HCT116 (cell line): ENCODE measurements at regions of chr20 and their contacts with region 1.

Region 1: GRCh38 chr20:44460795-44461141 is 14.9 kb upstream of the TTPAL start:
- DNase-seq: peak; percentile 31
- ATAC-seq: peak; percentile 89
- H3K4me3 ChIP-seq: no peak overlapping the region
- H3K27ac ChIP-seq: no peak overlapping the region
- H3K4me1 ChIP-seq: peaks cover 0 to 8% of the 10 kb centered on the region in 2 experiments; a peak in 1 of 4 replicates
- H3K27me3 ChIP-seq: no peaks in the 10 kb centered on the region
- CTCF ChIP-seq: peak; percentile 55 to 84 (median 65)
- POLR2A ChIP-seq: no peak
- RAD21 ChIP-seq: peak; percentile 87

Region 2: DNA sequence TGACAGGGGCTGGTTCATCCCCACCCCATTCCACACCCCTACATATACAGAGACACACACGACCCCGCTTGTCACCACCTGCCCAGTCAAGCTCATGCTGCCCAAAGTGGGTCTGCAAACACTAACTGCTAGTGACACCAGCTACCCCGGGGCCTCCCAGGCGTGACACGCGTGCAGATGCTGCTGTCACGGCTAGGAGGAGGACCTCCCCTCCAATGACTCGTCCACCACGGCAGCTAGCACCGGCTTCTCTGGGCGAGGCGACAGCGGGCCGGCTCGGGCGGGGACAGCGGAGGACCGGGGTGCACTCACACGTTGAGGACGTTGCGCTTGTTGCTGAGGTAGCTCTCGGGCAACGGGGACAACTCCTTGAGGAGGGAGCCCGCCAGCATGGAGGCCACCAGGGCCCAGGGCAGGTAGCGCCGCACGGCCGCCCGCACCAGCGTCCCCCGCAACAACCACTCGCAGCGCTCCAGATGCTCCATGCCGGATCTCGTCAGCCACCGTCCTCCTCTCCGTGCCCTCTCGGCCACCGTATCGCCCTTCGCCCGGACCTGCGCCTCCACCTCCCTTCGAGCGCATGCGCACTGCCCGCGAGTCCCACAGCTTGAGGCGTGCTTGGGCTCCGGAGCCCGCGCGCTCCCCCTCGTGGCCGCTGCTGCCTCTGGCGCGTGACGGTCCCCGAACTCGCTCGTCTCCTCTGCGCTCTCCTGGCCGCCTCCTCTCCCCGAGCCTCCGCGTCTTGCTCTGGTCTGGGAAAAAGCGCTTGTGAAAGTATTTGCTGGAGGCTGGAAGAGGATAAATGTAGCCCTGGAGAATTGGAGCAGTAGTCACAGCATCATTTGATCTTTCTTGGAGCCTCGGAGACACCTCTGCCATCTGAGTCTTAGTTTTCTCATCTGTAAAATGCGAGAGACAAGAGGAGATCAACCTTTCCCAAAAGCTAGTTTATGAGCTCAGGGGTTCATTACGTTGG is 149.8 kb before region 1 on chr20 and contains the start of gene FITM2:
- CTCF ChIA-PET with region 1: no interaction called
- POLR2A ChIA-PET with region 1: no interaction called
- RAD21 ChIA-PET with region 1: no interaction called
- intact Hi-C with region 1: loop called (anchors 10 kb)
- DNase-seq: peak; percentile 93
- ATAC-seq: peak; percentile 98
- H3K4me3 ChIP-seq: peak within 1 kb of the TSS; percentile 93 to 98
- H3K27ac ChIP-seq: peak within 1 kb of the TSS; percentile 54; the same call in 1 of the 2 replicates
- H3K4me1 ChIP-seq: peaks cover 8 to 13% of the 10 kb centered on the region in 2 experiments; a peak in 3 of 4 replicates
- H3K27me3 ChIP-seq: no peaks in the 10 kb centered on the region
- CTCF ChIP-seq: peak; percentile 83 to 92 (median 91)
- POLR2A ChIP-seq: peak; percentile 46
- RAD21 ChIP-seq: peak; percentile 85
- total RNA-seq, gene FITM2: 5.2 TPM

Region 3: DNA sequence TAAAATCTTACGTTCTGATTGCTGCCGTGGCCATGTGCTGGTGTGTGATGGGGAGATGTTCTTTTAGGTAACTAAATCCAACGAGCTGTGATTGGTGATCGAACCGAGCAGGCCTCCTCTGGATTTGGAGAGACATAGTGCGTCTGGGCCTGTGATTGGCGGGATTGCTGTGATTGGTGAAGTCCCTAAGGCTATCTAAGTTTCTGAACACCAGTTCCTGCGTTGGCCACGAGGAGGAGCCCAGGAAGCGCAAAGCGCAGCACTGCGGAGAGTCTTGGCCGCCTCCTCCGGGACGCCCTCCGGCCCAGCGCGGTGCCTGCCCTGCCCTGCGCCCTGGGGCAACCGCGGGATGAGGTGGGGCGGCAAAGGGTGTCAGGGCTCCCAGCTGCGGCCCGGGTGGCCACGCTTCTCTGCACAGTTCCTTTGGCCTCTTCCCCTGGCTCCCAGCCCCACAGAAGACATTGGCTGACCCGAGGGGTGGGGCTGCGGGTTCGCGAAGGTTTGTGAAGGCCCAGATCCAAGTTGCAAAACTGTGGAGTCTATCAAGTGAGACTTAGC is 72.2 kb before region 1 on chr20:
- CTCF ChIA-PET with region 1: interaction called, 6 read pairs
- POLR2A ChIA-PET with region 1: interaction called, 3 read pairs
- RAD21 ChIA-PET with region 1: interaction called in 1 of 2 experiments, 3 read pairs
- intact Hi-C with region 1: loop called (anchors 1 kb)
- DNase-seq: peak; percentile 88
- ATAC-seq: peak; percentile 94
- H3K4me3 ChIP-seq: no peak overlapping the region
- H3K27ac ChIP-seq: no peak overlapping the region
- H3K4me1 ChIP-seq: peaks cover 2 to 21% of the 10 kb centered on the region in 2 experiments; a peak in 2 of 4 replicates
- H3K27me3 ChIP-seq: no peaks in the 10 kb centered on the region
- CTCF ChIP-seq: peak; percentile 86 to 92 (median 89)
- POLR2A ChIP-seq: no peak
- RAD21 ChIP-seq: peak; percentile 99

Region 4: DNA sequence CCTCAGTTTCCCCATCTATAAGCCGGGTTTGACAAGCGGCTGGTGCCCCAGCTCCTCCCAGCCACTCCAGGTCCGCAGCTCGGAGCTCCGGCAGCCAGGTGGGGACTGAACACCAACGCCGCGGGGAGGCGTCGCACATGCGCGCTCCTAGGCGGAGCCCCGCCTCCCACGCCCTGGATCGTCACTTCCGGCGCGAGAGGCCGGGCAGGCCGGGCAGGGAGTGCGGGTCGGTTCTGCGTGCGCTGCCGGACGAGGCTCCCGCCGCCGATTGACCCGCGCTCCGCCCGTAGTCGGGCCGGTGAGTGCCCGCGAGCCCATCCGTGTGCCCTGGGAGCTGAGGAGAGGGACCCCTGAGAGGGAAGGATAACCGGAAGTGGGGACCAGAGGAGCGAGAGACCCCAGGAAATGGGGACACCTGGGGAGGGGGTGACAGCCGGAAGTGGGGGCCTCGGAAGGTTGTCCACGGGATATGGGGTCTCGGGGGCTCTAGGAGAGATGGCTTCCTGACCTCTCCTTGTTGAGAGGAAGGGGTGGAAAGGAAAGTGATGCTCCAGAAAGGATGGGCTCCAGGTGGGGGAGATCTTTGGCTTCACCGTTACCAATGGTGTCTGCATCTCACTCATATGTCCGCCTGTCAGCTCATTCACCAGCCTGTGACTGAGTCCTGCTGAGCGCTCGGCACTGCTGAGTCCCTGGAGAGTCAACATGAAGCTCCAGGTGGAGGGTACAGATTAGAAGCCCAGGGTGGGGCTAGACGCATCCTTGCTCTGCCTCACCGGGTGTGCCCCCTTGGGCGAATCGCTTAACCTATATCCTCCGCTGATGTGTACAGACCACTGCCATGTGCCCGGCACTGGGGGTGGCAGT is 15.2 kb after region 1 on chr20 and contains the start of gene TTPAL:
- CTCF ChIA-PET with region 1: no interaction called
- POLR2A ChIA-PET with region 1: no interaction called
- RAD21 ChIA-PET with region 1: no interaction called
- intact Hi-C with region 1: no loop called
- DNase-seq: peak; percentile 73
- ATAC-seq: peak; percentile 97
- H3K4me3 ChIP-seq: peak within 1 kb of the TSS; percentile 77 to 94
- H3K27ac ChIP-seq: peak within 1 kb of the TSS; percentile 59
- H3K4me1 ChIP-seq: peaks cover 3 to 20% of the 10 kb centered on the region in 2 experiments; a peak in 2 of 4 replicates
- H3K27me3 ChIP-seq: no peaks in the 10 kb centered on the region
- CTCF ChIP-seq: peak in 1 of 3 experiments; percentile 26; a peak in 1 of 6 replicates
- POLR2A ChIP-seq: peak; percentile 94
- RAD21 ChIP-seq: peak; percentile 46
- total RNA-seq, gene TTPAL: 20.4 TPM